OCI-LY7 (cell line): ENCODE measurements at regions of chr10 and their contacts with region 1.

Region 1: DNA sequence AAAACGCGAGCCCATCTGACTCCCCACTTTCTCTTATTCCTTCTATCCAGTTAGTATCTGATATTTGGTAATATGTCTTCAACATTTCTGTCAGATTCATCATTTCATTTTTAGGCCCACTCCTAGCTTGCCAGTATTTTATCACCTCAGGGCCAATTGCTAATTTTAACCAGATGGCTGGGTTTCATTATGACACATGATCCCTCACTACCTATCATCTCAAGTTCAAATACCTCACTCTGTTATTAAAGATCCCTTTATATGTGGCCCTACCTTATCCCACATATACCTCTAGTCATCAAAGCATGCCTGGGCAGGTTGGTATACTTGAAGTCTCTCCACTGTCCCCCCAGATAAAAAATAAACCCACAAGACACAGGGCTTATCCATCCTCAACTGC is 104.9 kb downstream of the RNLS start:
- DNase-seq: no peak
- H3K4me3 ChIP-seq: no peak overlapping the region
- H3K27ac ChIP-seq: no peak overlapping the region
- H3K4me1 ChIP-seq: no peaks in the 10 kb centered on the region
- CTCF ChIP-seq: no peak

Region 2: GRCh38 chr10:88490231-88490980 is 12.2 kb after region 1 on chr10:
- CTCF ChIA-PET with region 1: no interaction called
- POLR2A ChIA-PET with region 1: interaction called, 19 read pairs
- intact Hi-C with region 1: no loop called
- DNase-seq: no peak
- H3K4me3 ChIP-seq: no peak overlapping the region
- H3K27ac ChIP-seq: no peak overlapping the region
- H3K4me1 ChIP-seq: peaks cover 8% of the 10 kb centered on the region
- CTCF ChIP-seq: no peak